Caco-2 (cell line): ENCODE measurements at regions of chr1 and their contacts with region 1.

Region 1: DNA sequence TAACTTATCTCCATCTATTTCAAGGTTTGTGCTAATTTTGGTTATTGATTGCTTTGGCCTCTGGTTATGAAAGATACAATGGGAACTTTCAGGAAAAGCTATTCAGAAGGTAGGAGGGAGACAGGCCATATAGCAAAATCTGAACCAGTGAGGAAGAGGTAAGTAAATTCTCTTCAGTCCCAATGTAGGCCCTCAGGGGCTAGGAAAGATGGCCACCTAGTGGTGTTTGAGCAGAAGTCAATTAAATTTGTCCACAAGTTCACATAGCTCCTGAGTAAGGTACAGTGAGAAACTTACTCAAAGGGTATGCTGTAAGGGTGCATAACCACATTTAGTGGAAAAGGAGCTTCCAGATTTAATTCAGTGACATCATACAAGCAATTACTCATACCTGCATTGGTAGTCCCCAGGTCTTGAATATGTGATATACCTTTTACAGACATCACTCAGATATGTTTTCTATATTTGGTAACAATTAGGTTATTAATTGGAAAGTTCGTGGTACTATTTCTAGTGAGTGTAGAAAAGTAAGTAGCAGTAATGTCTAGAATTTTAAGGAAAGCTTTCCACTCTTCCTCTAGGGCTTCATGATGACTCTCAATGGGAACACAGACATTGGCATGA is 21.4 kb upstream of the FMO1 start:
- DNase-seq: peak; percentile 60 to 66
- H3K4me3 ChIP-seq: no peak overlapping the region
- H3K4me3 Mint-ChIP-seq: no peak overlapping the region
- H3K27ac Mint-ChIP-seq: no peak overlapping the region
- H3K4me1 ChIP-seq: no peaks in the 10 kb centered on the region
- H3K4me1 Mint-ChIP-seq: peaks cover 6% of the 10 kb centered on the region
- H3K27me3 ChIP-seq: no peaks in the 10 kb centered on the region
- H3K27me3 Mint-ChIP-seq: no peaks in the 10 kb centered on the region
- CTCF ChIP-seq: peak; percentile 80 to 83

Region 2: DNA sequence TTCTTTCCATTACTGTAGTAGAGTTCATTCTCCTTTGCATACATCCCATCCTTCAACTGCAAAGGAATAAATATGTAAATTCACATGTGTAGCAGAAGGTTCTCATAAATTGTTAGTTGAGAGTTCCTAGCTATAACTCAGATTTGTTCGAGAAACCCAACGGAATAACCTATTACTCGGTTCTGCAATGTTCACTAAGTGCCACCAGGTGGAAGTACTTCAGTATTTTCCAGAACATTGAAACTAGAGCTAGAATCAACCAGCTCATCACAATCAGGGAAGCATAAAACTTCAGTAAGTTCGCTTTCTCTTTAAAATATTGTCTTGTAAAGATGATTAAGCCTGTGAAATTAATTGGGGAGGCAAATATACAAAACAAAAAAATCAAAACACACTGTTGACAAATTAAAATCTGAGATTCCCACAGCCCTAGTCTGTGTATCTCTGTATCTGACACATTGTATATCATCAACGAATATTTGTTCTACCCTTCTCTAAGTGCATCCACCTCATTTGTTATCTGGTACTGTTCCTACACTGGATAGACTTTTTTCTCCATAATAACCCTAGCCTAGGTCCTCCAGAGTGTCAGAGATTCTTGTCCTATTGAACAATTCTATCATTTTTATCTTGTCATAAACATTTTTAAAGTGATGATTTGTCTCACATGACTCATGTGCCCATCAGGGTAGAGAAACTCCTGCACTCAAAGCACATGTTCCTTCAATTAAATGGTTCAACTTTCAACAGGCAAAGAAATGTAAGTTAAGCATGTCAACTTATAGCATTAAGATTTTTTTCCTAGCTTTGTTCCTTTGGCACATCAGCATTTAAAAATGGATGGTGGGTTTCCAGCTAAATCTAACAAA is 259.6 kb before region 1 on chr1:
- CTCF ChIA-PET with region 1: interaction called, 42 read pairs
- POLR2A ChIA-PET with region 1: no interaction called
- intact Hi-C with region 1: loop called (anchors 1 kb)
- DNase-seq: peak in 1 of 2 experiments; percentile 25
- H3K4me3 ChIP-seq: no peak overlapping the region
- H3K4me3 Mint-ChIP-seq: no peak overlapping the region
- H3K27ac Mint-ChIP-seq: no peak overlapping the region
- H3K4me1 ChIP-seq: no peaks in the 10 kb centered on the region
- H3K4me1 Mint-ChIP-seq: no peaks in the 10 kb centered on the region
- H3K27me3 ChIP-seq: no peaks in the 10 kb centered on the region
- H3K27me3 Mint-ChIP-seq: no peaks in the 10 kb centered on the region
- CTCF ChIP-seq: peak; percentile 60 to 66

Region 3: DNA sequence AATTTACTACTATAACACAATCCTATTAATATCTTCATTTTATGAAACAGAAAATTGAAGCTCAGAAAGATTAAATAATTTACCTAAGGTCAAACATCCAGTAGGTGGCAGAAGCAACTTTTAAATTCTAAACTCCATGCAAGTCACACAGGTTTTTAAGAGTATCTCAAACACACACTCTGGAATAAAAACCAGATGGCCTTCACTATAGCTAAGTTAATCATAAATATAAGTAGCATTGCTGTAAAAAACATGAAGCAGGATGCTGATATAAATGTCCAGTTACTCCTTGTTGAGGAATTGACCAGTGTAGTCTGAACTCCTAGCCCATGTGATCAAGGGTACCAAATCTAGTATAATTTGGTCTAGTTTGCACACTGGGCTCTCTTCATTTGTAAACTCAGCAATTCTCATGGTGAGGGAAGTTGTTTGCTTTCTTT is 145.5 kb before region 1 on chr1:
- CTCF ChIA-PET with region 1: interaction called, 37 read pairs
- POLR2A ChIA-PET with region 1: no interaction called
- intact Hi-C with region 1: loop called (anchors 1 kb)
- DNase-seq: peak in 1 of 2 experiments; percentile 4
- H3K4me3 ChIP-seq: no peak overlapping the region
- H3K4me3 Mint-ChIP-seq: no peak overlapping the region
- H3K27ac Mint-ChIP-seq: no peak overlapping the region
- H3K4me1 ChIP-seq: peaks cover 7% of the 10 kb centered on the region; the same call in 1 of the 2 replicates
- H3K4me1 Mint-ChIP-seq: no peaks in the 10 kb centered on the region
- H3K27me3 ChIP-seq: no peaks in the 10 kb centered on the region
- H3K27me3 Mint-ChIP-seq: no peaks in the 10 kb centered on the region
- CTCF ChIP-seq: peak; percentile 21 to 40

Region 4: GRCh38 chr1:171137580-171137979 is 89.3 kb before region 1 on chr1:
- CTCF ChIA-PET with region 1: interaction called, 11 read pairs
- POLR2A ChIA-PET with region 1: no interaction called
- intact Hi-C with region 1: loop called (anchors 1 kb)
- DNase-seq: no peak
- H3K4me3 ChIP-seq: no peak overlapping the region
- H3K4me3 Mint-ChIP-seq: no peak overlapping the region
- H3K27ac Mint-ChIP-seq: no peak overlapping the region
- H3K4me1 ChIP-seq: no peaks in the 10 kb centered on the region
- H3K4me1 Mint-ChIP-seq: peaks cover 6% of the 10 kb centered on the region
- H3K27me3 ChIP-seq: no peaks in the 10 kb centered on the region
- H3K27me3 Mint-ChIP-seq: no peaks in the 10 kb centered on the region
- CTCF ChIP-seq: no peak

Region 5: DNA sequence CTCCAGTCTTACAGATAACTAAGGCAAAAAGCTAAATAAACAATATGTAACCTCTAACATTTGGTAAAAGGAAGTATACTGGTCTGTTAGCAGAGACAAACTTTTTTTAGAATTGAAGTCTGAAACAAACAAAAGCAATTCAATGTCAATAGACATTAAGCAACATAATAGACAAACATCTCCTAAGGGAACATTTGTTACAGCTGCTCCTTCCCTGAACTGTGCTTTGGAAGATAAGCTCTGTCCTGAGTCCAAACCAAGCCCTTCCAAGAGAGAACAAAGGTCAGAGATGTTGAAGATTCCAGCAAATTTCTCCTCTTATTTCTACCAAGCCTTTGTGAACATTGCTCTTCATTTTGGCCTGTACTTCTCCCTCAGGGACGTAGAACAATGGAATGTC is 16.5 kb before region 1 on chr1:
- CTCF ChIA-PET with region 1: interaction called, 8 read pairs
- POLR2A ChIA-PET with region 1: no interaction called
- intact Hi-C with region 1: loop called (anchors 2 kb)
- DNase-seq: peak; percentile 49 to 57
- H3K4me3 ChIP-seq: no peak overlapping the region
- H3K4me3 Mint-ChIP-seq: no peak overlapping the region
- H3K27ac Mint-ChIP-seq: no peak overlapping the region
- H3K4me1 ChIP-seq: peaks cover 27% of the 10 kb centered on the region
- H3K4me1 Mint-ChIP-seq: peaks cover 11% of the 10 kb centered on the region
- H3K27me3 ChIP-seq: no peaks in the 10 kb centered on the region
- H3K27me3 Mint-ChIP-seq: no peaks in the 10 kb centered on the region
- CTCF ChIP-seq: no peak